ENCODE measurements at regions of chr1 and their contacts with region 1.

Region 1: DNA sequence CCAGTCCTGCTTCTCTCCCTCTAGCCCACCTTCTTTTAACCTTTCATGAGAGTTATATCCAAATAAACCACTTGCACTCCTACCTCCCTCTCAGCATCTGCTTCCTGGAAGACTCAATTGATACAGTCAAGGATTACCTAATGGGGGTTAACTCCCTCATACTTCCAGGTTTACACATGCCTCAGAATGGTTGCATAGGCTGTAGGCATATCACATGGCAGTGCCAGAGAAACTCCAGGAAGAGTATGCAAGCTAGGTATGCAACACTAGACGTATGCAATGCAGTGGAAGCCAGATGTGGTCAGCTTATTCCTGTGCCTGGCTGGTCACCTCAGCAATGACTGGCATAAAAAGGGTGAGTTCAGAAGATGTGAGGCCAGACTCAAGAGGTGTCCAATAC is 32.7 kb upstream of the VANGL1 start:
- DNase-seq: no peak
- ATAC-seq: no peak

Region 2: GRCh38 chr1:115706587-115707425 is 97.8 kb after region 1 on chr1:
- intact Hi-C with region 1: loop called (anchors 2 kb)
- DNase-seq: no peak
- ATAC-seq: peak; percentile 55

Region 3: GRCh38 chr1:115839029-115839678 is 230.1 kb after region 1 on chr1:
- intact Hi-C with region 1: no loop called
- DNase-seq: peak; percentile 41
- ATAC-seq: peak; percentile 51

Measured in Right ventricle myocardium superior (tissue), 1 donor.